Endothelial cell of umbilical vein (primary cell): ENCODE measurements at regions of chr15 and their contacts with region 1.

Region 1: DNA sequence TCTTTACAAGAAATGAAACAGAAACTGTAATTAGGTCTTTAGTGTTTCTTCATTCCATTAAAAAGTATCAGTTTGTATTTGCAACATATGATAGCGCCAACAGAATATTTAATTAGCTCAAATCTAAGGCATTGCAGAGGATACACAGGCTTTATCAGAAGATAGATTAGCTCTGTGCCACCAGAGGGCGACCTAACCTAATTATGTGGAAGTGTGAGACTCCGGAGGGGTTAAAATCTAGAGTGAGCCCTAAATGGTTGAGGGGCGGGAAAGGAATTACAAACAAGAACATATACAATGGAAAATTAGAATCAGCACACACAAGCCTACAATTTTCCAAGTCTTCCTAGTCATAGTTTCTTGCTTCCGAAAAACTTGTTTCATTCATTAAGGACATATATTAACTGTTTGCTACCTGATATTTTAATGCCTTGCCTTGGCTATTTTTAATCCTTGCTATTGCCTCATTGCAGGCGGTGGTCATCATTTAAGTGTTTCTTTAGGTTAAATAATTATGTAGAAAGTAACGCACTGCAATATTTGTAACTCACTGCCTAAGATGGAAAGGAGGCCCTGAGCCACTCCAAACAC is 18.0 kb upstream of the RYR3 start:
- DNase-seq: peak; percentile 69
- H3K4me3 ChIP-seq: no peak overlapping the region
- H3K27ac ChIP-seq: no peak overlapping the region
- H3K4me1 ChIP-seq: peaks cover 3% of the 10 kb centered on the region
- H3K27me3 ChIP-seq: peaks cover 10 to 19% of the 10 kb centered on the region in 2 experiments
- CTCF ChIP-seq: peak; percentile 57 to 59
- POLR2A ChIP-seq: no peak

Region 2: DNA sequence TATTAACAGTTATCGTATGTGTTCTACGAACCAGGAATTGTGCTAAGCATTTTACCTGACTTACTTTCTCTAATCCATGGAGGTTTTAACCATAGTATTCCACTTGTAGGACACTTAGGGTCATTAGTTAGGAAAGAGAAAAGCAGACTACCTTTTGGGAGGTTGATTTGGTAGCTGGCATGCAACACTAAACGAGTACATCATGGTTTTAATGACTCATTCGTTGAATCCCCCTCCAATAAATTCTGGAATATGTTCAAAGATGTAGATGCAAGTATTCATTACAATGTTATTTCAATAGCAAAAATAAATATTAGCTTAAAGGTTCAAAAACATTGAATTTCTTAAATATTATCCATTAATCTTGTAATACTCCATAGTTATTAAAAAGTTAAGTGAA is 260.8 kb before region 1 on chr15:
- CTCF ChIA-PET with region 1: no interaction called
- POLR2A ChIA-PET with region 1: no interaction called
- dilution Hi-C with region 1: no loop called
- intact Hi-C with region 1: no loop called
- DNase-seq: no peak
- H3K4me3 ChIP-seq: no peak overlapping the region
- H3K27ac ChIP-seq: no peak overlapping the region
- H3K4me1 ChIP-seq: no peaks in the 10 kb centered on the region
- H3K27me3 ChIP-seq: no peaks in the 10 kb centered on the region
- CTCF ChIP-seq: no peak
- POLR2A ChIP-seq: no peak

Region 3: GRCh38 chr15:33086507-33087121 is 206.2 kb before region 1 on chr15:
- CTCF ChIA-PET with region 1: interaction called, 11 read pairs
- POLR2A ChIA-PET with region 1: no interaction called
- dilution Hi-C with region 1: no loop called
- intact Hi-C with region 1: loop called (anchors 5 kb)
- DNase-seq: peak; percentile 62
- H3K4me3 ChIP-seq: no peak overlapping the region
- H3K27ac ChIP-seq: no peak overlapping the region
- H3K4me1 ChIP-seq: no peaks in the 10 kb centered on the region
- H3K27me3 ChIP-seq: no peaks in the 10 kb centered on the region
- CTCF ChIP-seq: peak; percentile 35 to 44
- POLR2A ChIP-seq: no peak

Region 4: DNA sequence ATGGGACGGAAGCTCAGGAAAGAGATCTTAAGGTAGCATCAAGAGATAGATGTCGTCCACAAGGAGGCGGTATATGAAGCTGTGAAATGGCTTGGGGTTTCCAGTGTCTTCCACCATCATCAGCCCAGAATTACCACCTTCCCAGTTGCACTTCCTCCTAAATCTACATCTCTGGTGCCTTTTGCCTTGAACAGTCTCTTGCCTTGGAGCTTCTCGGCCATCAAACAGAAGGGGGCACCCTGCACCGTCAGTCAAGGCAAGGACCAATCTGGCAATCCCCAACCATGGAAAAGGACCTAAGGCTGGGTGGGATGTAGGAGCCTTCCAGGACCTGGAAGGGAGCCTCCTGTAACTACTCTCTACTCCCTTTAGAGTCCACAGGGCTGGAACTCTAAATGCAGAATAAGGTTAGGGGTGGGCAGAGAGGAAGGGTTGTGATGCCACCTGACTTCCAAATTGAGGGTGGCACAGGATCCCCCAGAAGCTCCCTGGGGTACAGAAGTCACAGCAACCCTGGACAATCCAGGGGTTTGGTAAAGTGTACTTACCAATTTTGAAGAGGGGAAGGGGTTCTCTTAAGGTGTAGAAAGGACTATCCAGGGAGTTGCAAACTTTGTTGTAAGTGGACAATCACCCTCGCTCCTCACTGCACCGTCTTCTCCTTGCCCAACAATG is 16.9 kb after region 1 on chr15:
- CTCF ChIA-PET with region 1: interaction called, 10 read pairs
- POLR2A ChIA-PET with region 1: no interaction called
- dilution Hi-C with region 1: no loop called
- intact Hi-C with region 1: no loop called
- DNase-seq: no peak
- H3K4me3 ChIP-seq: no peak overlapping the region
- H3K27ac ChIP-seq: no peak overlapping the region
- H3K4me1 ChIP-seq: no peaks in the 10 kb centered on the region
- H3K27me3 ChIP-seq: peaks cover 28 to 38% of the 10 kb centered on the region in 2 experiments
- CTCF ChIP-seq: no peak
- POLR2A ChIP-seq: no peak

Region 5: DNA sequence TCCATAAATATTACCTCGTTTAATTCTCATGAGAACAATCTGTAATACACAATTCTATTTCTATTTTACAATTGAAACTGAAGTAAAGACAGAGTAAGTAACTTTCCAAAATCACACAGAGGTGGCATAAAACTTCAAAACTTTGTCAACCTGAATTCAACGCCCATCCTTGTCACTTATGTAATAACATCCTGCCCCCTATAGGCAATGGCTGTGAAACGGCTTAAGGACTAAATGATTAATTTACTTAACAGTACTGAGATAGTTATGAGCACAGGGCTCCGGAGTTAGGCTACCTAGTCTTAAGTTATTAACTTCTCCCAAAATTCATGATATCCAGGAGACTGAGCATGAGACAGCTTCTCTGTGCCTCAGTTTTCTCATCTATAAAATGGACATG is 382.4 kb after region 1 on chr15:
- CTCF ChIA-PET with region 1: interaction called, 14 read pairs
- POLR2A ChIA-PET with region 1: no interaction called
- dilution Hi-C with region 1: no loop called
- intact Hi-C with region 1: no loop called
- DNase-seq: peak; percentile 28
- H3K4me3 ChIP-seq: no peak overlapping the region
- H3K27ac ChIP-seq: no peak overlapping the region
- H3K4me1 ChIP-seq: no peaks in the 10 kb centered on the region
- H3K27me3 ChIP-seq: peaks cover 7 to 9% of the 10 kb centered on the region in 2 experiments
- CTCF ChIP-seq: peak; percentile 15 to 16
- POLR2A ChIP-seq: no peak

Region 6: DNA sequence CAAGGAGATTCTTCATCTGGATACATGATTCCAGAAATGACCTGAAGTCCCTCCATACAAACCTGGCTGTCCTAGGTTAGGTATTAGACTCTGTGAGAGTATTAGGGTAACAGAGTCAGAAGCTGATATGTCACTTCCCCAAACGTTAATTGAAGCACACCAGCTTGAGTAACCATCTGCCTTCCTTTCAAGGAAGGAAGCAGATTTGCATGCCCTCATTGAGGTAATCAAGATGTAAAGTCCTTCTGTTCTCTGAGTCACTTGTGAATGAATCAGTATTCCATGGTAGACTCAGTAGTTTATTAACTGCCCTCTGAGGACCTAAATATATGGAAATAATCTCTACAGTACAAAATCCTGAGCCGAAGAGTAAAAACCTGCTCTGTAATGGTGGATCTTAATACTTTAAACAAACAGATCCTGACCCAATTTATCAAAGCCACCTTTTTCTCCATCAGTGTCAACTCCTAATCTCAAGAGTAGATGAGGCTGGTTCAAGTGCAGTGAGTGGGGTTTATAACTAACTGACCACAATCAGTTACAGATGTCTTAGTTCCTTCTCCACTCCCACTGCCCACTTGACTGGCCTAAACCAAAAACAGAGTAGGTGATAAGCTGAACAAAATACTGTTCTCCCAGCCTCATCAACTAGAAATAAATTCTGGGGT is 429.3 kb after region 1 on chr15:
- CTCF ChIA-PET with region 1: interaction called, 14 read pairs
- POLR2A ChIA-PET with region 1: no interaction called
- dilution Hi-C with region 1: no loop called
- intact Hi-C with region 1: no loop called
- DNase-seq: peak; percentile 78
- H3K4me3 ChIP-seq: no peak overlapping the region
- H3K27ac ChIP-seq: peak overlapping the region; percentile 96
- H3K4me1 ChIP-seq: peaks cover 51% of the 10 kb centered on the region
- H3K27me3 ChIP-seq: no peaks in the 10 kb centered on the region
- CTCF ChIP-seq: no peak
- POLR2A ChIP-seq: no peak

Region 7: GRCh38 chr15:33737687-33738601 is 445.1 kb after region 1 on chr15:
- CTCF ChIA-PET with region 1: interaction called, 277 read pairs
- POLR2A ChIA-PET with region 1: no interaction called
- dilution Hi-C with region 1: no loop called
- intact Hi-C with region 1: loop called (anchors 1 kb)
- DNase-seq: peak; percentile 49
- H3K4me3 ChIP-seq: no peak overlapping the region
- H3K27ac ChIP-seq: no peak overlapping the region
- H3K4me1 ChIP-seq: no peaks in the 10 kb centered on the region
- H3K27me3 ChIP-seq: no peaks in the 10 kb centered on the region
- CTCF ChIP-seq: peak; percentile 80
- POLR2A ChIP-seq: no peak